ENCODE measurements at regions of chr5 and their contacts with region 1.

Region 1: DNA sequence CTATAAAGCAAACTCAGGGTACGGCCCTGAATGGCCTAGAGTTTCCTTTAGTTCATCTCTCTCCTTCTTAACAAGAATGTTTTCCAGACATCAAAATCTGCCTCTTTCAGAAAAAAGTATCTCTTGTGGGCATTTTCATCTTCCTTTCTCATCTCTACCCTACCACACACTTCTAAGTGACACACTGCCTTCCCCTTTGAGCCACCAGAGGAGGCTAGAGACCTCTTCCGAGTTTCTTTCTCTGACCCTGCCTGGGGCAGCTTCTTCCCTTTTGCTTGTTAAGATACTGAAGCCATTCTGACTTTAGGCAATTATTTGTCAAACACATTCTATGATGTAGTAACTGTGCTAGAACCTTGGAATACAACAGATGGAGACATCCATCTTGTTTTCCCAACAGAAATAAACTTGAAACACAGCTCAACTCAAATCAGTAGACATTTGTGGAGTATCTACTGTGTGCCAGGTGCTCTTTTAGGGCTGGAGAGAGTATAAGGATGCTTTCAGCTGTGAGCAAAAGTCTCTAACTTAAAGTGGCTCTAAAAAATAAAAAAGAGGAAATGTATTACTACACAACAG is 8.6 kb upstream of the SV2C start:
- DNase-seq: peak; percentile 34 to 37
- H3K4me3 ChIP-seq: no peak overlapping the region
- H3K27ac ChIP-seq: no peak overlapping the region
- H3K4me1 ChIP-seq: no peaks in the 10 kb centered on the region
- H3K27me3 ChIP-seq: peaks cover 0 to 36% (median 0%) of the 10 kb centered on the region in 3 donors
- CTCF ChIP-seq: peak in 5 of 7 experiments; percentile 26 to 64 (median 53)
- EP300 ChIP-seq: no peak
- POLR2A ChIP-seq: no peak

Region 2: GRCh38 chr5:76165711-76166374 is 91.3 kb after region 1 on chr5:
- intact Hi-C with region 1: loop called (anchors 10 kb)
- DNase-seq: no peak
- H3K4me3 ChIP-seq: no peak overlapping the region
- H3K27ac ChIP-seq: no peak overlapping the region
- H3K4me1 ChIP-seq: no peaks in the 10 kb centered on the region
- H3K27me3 ChIP-seq: no peaks in the 10 kb centered on the region
- CTCF ChIP-seq: no peak
- EP300 ChIP-seq: no peak
- POLR2A ChIP-seq: no peak

Region 3: DNA sequence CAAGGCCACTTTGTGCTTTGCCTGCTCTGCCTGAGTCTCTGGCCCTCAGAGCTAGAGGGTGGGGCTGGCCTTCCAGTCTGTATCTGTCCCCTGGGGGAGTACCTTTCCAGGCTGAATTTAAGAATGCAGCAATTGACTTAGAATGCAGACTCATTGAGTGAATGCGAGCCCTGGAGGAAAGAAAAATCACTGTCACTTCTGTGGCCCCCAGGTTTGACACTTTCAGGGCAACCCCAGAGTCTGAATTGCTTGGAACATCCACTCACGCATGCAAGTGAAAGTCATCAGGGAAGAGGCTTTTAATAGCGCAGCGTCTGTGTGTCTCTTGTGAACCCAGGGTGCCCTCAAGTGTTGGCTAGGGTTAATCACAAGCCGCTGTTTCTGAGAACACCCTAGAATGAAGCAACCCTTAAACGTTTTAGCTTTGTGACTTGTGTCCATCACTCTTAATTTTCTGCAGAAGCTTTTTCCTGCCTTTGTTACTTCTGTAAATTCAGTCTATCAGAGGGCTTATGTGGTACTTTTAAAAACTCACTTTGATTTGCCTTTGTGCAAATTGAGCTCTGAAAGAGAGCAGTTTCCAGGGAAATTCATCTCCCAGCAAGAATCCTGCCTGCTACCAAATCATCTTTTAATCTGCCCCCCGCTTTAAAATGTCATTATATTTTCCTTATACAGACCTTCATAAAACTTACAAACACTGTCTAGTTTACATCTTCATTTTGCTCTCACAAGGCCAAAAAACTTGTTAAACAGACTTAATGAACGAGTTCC is 181.7 kb after region 1 on chr5:
- intact Hi-C with region 1: loop called (anchors 10 kb)
- DNase-seq: peak; percentile 54 to 90
- H3K4me3 ChIP-seq: no peak overlapping the region
- H3K27ac ChIP-seq: no peak overlapping the region
- H3K4me1 ChIP-seq: peaks cover 0 to 11% (median 5%) of the 10 kb centered on the region in 4 donors
- H3K27me3 ChIP-seq: peaks cover 0 to 7% (median 0%) of the 10 kb centered on the region in 3 donors
- CTCF ChIP-seq: peak in 5 of 7 experiments; percentile 25 to 46 (median 41)
- EP300 ChIP-seq: no peak
- POLR2A ChIP-seq: no peak

Region 4: GRCh38 chr5:76292620-76293322 is 218.2 kb after region 1 on chr5:
- intact Hi-C with region 1: no loop called
- DNase-seq: peak in 1 of 2 donors; percentile 28
- H3K4me3 ChIP-seq: no peak overlapping the region
- H3K27ac ChIP-seq: peak overlapping the region in 3 of 5 donors; percentile 0 to 58 (median 8)
- H3K4me1 ChIP-seq: peaks cover 4 to 30% (median 14%) of the 10 kb centered on the region in 4 donors
- H3K27me3 ChIP-seq: no peaks in the 10 kb centered on the region
- CTCF ChIP-seq: no peak
- EP300 ChIP-seq: no peak
- POLR2A ChIP-seq: no peak